ENCODE measurements at regions of chr1 and their contacts with region 1.

Region 1: DNA sequence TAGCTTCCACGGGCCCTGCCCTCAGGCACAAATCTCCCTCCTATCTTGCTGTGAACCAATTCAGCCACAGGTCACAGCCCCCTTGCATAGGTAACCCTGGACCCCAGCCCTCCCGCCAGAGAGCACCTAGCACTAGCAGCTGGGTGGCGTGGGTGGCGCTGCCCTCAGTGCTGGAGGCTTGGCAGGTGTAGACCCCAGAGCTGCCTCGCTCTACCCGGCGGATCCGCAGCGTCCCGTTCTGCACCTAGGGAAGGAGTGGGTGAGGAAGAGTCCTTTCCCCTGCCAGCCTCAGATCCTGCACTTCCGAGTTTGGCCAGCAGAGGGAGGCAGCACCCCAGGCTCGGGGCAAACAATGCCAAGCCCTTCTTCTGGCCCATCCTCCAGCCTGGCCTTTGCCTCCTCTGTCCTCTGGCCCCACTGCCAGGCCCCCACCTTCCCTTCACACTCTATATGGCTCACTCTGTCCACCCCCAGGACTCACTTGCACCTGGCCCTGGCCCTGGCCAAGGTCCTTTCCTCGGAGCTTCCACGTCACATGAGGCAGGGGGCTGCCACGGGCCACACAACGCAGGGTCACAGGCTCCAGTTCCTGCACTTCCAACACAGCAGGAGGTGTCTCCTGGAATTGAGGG is 9.0 kb downstream of the IGSF9 start:
- DNase-seq: peak; percentile 89
- H3K4me3 Mint-ChIP-seq: no peak overlapping the region
- H3K27ac Mint-ChIP-seq: no peak overlapping the region
- H3K4me1 Mint-ChIP-seq: no peaks in the 10 kb centered on the region
- H3K27me3 Mint-ChIP-seq: no peaks in the 10 kb centered on the region

Region 2: GRCh38 chr1:159798893-159799292 is 137.5 kb before region 1 on chr1:
- CTCF ChIA-PET with region 1: no interaction called
- intact Hi-C with region 1: no loop called
- DNase-seq: peak; percentile 71
- H3K4me3 Mint-ChIP-seq: no peak overlapping the region
- H3K27ac Mint-ChIP-seq: no peak overlapping the region
- H3K4me1 Mint-ChIP-seq: peaks cover 13% of the 10 kb centered on the region
- H3K27me3 Mint-ChIP-seq: no peaks in the 10 kb centered on the region

Region 3: DNA sequence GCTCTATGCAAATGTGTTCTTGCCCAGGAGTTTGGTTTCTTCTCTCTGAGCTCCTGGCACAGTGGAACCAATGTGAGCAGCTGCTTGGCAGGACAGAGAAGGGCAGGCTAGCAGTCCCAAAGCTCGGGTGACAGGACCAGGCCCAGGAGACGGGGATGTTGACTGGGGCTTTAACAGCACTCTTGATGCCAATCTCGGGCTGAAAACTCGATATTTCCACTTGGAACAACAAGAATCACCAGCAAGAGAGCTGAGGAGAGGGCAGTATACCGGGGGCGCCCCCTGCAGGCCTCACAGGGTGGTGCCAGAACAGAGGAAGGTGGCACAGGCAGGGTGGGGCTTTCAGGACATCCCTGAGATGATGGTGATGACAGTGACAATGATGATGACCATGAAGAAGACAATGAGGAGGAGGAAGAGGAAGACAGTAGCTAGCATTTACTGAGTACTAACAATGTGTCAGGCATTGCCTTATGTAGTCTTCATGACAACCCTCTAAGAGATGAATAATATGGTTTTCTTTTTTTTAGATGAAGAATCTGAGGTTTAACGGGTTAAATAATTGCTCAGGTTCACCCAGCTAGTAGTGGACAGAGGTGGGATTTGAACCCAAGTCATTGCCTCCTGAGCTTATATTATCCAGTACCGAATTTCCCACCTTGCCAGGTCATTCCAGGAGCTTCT is 142.3 kb after region 1 on chr1:
- CTCF ChIA-PET with region 1: interaction called, 11 read pairs
- intact Hi-C with region 1: loop called (anchors 1 kb)
- DNase-seq: peak; percentile 77
- H3K4me3 Mint-ChIP-seq: no peak overlapping the region
- H3K27ac Mint-ChIP-seq: no peak overlapping the region
- H3K4me1 Mint-ChIP-seq: no peaks in the 10 kb centered on the region
- H3K27me3 Mint-ChIP-seq: peaks cover 40% of the 10 kb centered on the region

Measured in activated naive CD4-positive, alpha-beta T cell treated with anti-CD3 and anti-CD28 coated beads for 36 hours (primary cell).